Right cardiac atrium (tissue), 5 donors: ENCODE measurements at regions of chr18 and their contacts with region 1.

Region 1: DNA sequence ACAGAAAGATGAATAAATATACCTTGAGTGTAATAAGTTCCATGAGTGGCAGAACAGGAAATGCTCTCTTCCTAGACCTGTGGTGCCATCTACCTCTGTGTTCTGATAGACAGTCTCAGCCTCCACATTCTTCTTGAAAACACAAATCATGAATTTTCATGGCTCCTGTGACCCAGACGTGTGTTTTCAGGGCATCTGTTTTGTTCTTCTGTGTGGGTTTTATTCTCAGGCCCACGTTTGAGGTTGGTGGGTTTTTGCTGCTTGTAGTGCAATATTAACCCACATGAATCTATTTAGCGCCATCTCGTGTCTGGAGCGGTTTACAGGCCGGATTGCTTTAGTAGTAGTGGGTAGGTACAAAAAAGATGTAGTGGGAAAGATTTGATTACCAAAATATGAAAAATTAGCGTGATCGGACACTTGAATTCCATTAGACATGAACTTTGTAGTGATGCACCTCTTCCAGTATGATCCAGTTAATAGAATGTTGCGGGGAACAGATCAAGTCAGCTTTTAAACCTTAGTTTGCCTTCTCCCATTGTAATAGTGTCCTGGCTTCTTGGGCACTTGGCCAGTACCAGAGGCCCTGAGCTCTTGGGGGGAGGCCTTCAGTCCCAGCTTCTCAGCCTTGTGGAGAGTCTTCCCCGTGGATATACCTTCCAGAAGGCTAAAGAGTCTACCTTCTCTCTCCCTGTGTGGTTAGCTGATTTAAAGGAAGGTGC is 256.5 kb downstream of the TPGS2 start:
- DNase-seq: peak in 2 of 3 donors; percentile 24 to 71
- ATAC-seq: peak; percentile 70 to 76
- H3K4me3 ChIP-seq: no peak overlapping the region
- H3K27ac ChIP-seq: peak overlapping the region; percentile 50
- H3K4me1 ChIP-seq: peaks cover 4% of the 10 kb centered on the region
- H3K27me3 ChIP-seq: no peaks in the 10 kb centered on the region

Region 2: GRCh38 chr18:36179562-36180355 is 392.5 kb before region 1 on chr18:
- intact Hi-C with region 1: no loop called
- DNase-seq: peak; percentile 79 to 94 (median 87)
- ATAC-seq: peak; percentile 61 to 70
- H3K4me3 ChIP-seq: no peak overlapping the region
- H3K27ac ChIP-seq: no peak overlapping the region
- H3K4me1 ChIP-seq: no peaks in the 10 kb centered on the region
- H3K27me3 ChIP-seq: no peaks in the 10 kb centered on the region

Region 3: GRCh38 chr18:36296650-36297416 is 275.5 kb before region 1 on chr18:
- intact Hi-C with region 1: loop called in 3 of 4 experiments (anchors 5 to 10 kb)
- DNase-seq: peak; percentile 74 to 83 (median 82)
- ATAC-seq: peak; percentile 72 to 79
- H3K4me3 ChIP-seq: peak overlapping the region; percentile 54
- H3K27ac ChIP-seq: peak overlapping the region; percentile 57
- H3K4me1 ChIP-seq: no peaks in the 10 kb centered on the region
- H3K27me3 ChIP-seq: no peaks in the 10 kb centered on the region